Activated CD4-positive, alpha-beta T cell treated with anti-CD3 and anti-CD28 coated beads, Interleukin-2, amount 10 ng/mL, durations not matched to agents 24 days and 14 days (primary cell): ENCODE measurements at regions of chr2 and their contacts with region 1.

Region 1: GRCh38 chr2:20962939-20963557 is 80.8 kb downstream of the APOB start:
- DNase-seq: peak; percentile 89
- H3K4me3 Mint-ChIP-seq: no peak overlapping the region
- H3K27ac Mint-ChIP-seq: no peak overlapping the region
- H3K4me1 Mint-ChIP-seq: no peaks in the 10 kb centered on the region
- H3K27me3 Mint-ChIP-seq: peaks cover 15% of the 10 kb centered on the region

Region 2: GRCh38 chr2:20723543-20723942 is 239.5 kb before region 1 on chr2:
- intact Hi-C with region 1: loop called (anchors 2 kb)
- DNase-seq: no peak
- H3K4me3 Mint-ChIP-seq: no peak overlapping the region
- H3K27ac Mint-ChIP-seq: no peak overlapping the region
- H3K4me1 Mint-ChIP-seq: peaks cover 2% of the 10 kb centered on the region
- H3K27me3 Mint-ChIP-seq: no peaks in the 10 kb centered on the region

Region 3: GRCh38 chr2:20781656-20782265 is 181.3 kb before region 1 on chr2:
- intact Hi-C with region 1: loop called (anchors 1 kb)
- DNase-seq: peak; percentile 58
- H3K4me3 Mint-ChIP-seq: no peak overlapping the region
- H3K27ac Mint-ChIP-seq: no peak overlapping the region
- H3K4me1 Mint-ChIP-seq: no peaks in the 10 kb centered on the region
- H3K27me3 Mint-ChIP-seq: no peaks in the 10 kb centered on the region

Region 4: DNA sequence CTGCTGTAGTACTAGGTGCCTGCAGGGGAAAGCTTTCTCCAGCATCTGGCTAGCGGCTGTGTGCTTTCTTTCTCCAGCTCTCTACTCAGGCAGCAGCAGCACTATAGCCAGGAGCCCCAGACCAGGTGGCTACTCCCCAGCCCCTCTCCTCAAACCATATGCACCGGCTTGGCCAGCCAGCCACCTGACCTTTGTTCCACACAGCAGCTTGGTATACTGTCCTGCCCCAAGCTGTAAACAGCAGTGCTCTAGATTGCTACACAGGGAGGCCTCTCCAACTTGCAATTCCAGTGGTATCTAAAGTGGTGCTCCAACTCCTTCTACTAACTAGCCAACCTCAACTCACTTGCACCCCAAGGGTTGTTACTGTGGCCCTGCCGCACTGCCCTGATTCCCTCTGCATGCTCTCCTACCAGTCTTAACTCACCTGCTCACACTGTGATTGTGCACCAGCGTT is 159.8 kb before region 1 on chr2:
- intact Hi-C with region 1: no loop called
- DNase-seq: no peak
- H3K4me3 Mint-ChIP-seq: no peak overlapping the region
- H3K27ac Mint-ChIP-seq: no peak overlapping the region
- H3K4me1 Mint-ChIP-seq: peaks cover 2% of the 10 kb centered on the region
- H3K27me3 Mint-ChIP-seq: no peaks in the 10 kb centered on the region

Region 5: GRCh38 chr2:20838016-20838415 is 125.0 kb before region 1 on chr2:
- intact Hi-C with region 1: no loop called
- DNase-seq: no peak
- H3K4me3 Mint-ChIP-seq: no peak overlapping the region
- H3K27ac Mint-ChIP-seq: no peak overlapping the region
- H3K4me1 Mint-ChIP-seq: no peaks in the 10 kb centered on the region
- H3K27me3 Mint-ChIP-seq: peaks cover 41% of the 10 kb centered on the region

Region 6: DNA sequence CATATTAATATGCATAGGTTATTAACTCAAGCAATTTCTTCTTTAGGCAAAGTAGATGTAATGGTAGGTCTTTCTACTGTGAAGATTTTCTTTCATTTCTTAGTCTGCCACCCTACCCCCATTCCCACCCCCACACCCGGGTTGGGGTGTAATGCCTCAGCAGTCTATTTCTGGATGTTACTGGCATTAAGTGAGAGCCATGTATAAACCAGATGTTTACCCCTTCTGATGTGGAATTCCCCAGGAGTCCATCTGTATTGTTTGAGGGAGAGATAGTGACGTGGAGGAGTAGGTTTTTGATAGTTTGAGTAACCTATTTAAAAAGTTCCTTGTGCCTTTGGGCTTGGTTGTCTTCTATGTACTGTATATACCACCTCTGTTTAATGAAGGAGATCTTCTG is 172.5 kb after region 1 on chr2:
- intact Hi-C with region 1: no loop called
- DNase-seq: no peak
- H3K4me3 Mint-ChIP-seq: no peak overlapping the region
- H3K27ac Mint-ChIP-seq: no peak overlapping the region
- H3K4me1 Mint-ChIP-seq: no peaks in the 10 kb centered on the region
- H3K27me3 Mint-ChIP-seq: no peaks in the 10 kb centered on the region